Colonic mucosa (tissue), 4 donors: ENCODE measurements at regions of chr17 and their contacts with region 1.

Region 1: DNA sequence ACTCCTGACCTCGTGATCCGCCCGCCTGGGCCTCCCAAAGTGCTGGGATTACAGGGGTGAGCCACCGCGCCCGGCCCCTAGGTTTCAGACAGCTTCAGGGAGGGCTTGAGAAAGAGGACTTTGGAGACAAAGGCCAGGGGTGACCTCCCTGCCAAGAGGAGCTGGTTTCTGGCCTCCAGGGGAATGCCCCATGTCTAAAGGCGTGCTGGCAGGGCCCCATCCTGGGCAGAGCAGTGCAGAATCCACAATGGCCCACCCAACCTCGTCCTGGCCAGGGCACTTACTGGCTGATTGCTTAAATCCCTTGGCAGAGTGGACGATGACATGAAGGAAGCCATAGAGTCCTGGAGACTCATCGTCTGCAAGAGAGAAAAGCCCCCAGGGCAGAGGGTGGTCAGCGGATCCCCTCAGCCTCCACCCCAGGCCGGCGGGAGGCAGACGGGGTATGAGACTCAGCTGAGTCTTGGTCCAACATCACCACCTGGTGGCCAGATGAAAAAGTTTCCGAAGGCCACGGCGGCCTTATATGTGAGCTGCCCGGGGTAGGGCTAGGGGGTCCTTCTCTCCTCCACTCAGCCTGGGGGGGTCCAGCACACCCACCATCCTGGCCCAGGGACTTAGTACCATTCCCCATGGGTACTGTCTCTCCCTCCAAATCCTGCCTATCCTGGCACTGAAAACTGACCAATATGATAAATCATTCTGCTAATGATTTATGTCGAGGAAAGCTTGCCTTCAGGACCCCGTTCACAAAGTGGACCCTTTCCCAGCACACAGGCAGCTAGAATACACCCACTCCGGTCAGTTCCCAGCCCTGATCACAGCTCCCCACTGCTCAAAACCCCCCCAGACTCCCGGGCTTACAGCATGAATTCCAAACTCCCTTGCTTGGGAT is 59.1 kb downstream of the TIMM22 start:
- DNase-seq: peak; percentile 56
- H3K4me3 ChIP-seq: no peak overlapping the region
- H3K27ac ChIP-seq: no peak overlapping the region
- H3K4me1 ChIP-seq: no peaks in the 10 kb centered on the region
- H3K27me3 ChIP-seq: no peaks in the 10 kb centered on the region
- CTCF ChIP-seq: peak; percentile 68

Region 2: DNA sequence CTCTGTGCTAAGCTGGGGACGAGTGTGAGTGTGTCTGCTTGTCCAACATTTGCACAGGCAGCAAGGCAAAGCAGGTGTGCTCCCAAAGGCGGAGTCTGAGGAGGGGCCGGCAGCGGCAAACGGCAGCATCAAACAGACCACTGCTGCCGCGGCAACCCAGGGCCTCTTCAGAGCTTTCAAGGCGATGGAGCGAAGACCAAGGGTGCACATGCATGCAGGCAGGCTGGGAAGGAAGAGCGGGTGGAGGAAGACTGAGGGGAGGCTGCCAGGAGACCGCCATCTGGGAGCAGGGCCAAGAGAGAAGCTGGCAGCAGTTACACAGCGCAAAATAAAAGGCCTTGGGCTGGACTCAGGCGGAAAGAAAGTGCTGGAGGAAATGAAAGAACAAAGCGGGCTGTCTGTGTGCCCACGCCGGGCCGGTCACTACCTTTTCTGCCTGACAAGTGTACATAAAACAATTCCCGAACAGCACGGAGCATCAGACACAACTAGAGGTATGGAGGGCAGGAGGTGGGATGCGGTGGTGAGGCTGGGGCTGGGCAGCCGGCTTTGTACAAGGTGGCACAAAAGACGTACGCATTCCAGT is 50.5 kb before region 1 on chr17:
- intact Hi-C with region 1: loop called (anchors 5 kb)
- DNase-seq: peak; percentile 63
- H3K4me3 ChIP-seq: no peak overlapping the region
- H3K27ac ChIP-seq: peak overlapping the region; percentile 30
- H3K4me1 ChIP-seq: no peaks in the 10 kb centered on the region
- H3K27me3 ChIP-seq: no peaks in the 10 kb centered on the region
- CTCF ChIP-seq: no peak

Region 3: DNA sequence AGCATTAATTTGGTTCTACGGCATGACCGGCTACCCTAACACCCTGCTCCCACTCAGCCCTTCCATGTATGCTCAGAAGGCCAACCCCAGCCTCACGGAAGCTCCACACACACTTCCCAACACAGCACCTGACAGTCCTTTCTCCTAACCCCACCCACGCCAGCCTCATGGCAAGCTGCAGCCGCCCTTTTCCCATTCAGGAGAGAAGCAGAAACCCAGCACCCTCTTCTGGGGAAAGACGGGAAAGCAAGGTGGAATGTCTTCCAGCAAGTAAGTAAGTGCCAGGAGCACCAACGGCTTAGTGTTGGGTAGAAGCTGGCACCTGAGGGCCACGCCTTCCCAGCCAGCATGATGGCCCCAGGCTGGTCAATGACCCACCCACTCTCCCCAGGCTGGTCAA is 91.7 kb after region 1 on chr17:
- intact Hi-C with region 1: loop called (anchors 5 kb)
- DNase-seq: peak; percentile 91
- H3K4me3 ChIP-seq: no peak overlapping the region
- H3K27ac ChIP-seq: no peak overlapping the region
- H3K4me1 ChIP-seq: peaks cover 3% of the 10 kb centered on the region
- H3K27me3 ChIP-seq: no peaks in the 10 kb centered on the region
- CTCF ChIP-seq: peak; percentile 34